Naive thymus-derived CD4-positive, alpha-beta T cell (primary cell): ENCODE measurements at regions of chr20 and their contacts with region 1.

Region 1: DNA sequence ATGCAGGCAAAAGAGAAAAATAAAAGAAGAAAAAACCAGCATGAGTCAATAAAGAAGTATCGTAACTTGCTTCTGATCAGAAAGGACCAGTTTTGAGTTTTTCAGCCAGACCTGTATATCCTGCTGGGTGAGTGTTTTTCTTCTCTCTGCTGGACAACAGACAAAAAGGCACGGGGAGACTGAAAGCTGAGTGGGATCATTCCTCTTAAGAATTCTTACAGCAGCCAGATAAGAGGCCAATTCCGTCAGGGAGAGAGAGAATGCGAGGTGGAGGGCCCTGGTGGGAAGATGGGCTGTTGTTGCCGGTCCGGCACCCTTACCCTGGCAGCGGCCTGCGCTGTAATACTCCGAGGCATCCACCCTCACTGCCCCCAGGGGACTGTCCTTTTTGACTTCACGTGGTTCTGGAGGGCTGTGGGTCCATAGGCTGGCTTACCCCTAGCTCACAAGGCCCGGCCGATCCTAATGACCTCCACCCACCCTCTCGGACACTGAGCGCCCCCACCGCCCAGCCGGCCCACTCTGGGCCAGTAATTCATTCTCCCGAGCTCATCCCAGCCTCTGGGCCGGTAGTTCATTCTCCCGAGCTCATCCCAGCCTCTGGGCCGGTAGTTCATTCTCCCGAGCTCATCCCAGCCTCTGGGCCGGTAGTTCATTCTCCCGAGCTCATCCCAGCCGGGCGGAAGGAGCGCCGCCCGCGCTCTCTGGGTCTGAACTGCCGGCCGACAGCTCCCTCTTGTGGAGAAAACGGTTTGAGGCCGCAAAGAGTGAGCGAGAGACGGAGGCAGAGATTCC is 118.3 kb upstream of the SIRPA start:
- DNase-seq: peak; percentile 58 to 86 (median 74)
- ATAC-seq: peak; percentile 95
- H3K4me3 ChIP-seq: peak overlapping the region; percentile 77
- H3K4me3 Mint-ChIP-seq: peak overlapping the region; percentile 68 to 94 (median 85)
- H3K27ac ChIP-seq: peak overlapping the region; percentile 50
- H3K27ac Mint-ChIP-seq: peak overlapping the region in 5 of 9 donors; percentile 9 to 66 (median 62)
- H3K4me1 ChIP-seq: no peaks in the 10 kb centered on the region
- H3K4me1 Mint-ChIP-seq: peaks cover 12 to 17% (median 16%) of the 10 kb centered on the region in 7 donors
- H3K27me3 ChIP-seq: no peaks in the 10 kb centered on the region
- H3K27me3 Mint-ChIP-seq: peaks cover 7 to 11% (median 8%) of the 10 kb centered on the region in 5 donors

Region 2: GRCh38 chr20:1313236-1313964 is 463.5 kb before region 1 on chr20:
- CTCF ChIA-PET with region 1: no interaction called
- POLR2A ChIA-PET with region 1: no interaction called
- intact Hi-C with region 1: loop called in 1 of 2 experiments (anchors 5 kb)
- DNase-seq: peak; percentile 41 to 69 (median 57)
- ATAC-seq: peak; percentile 85
- H3K4me3 ChIP-seq: no peak overlapping the region
- H3K4me3 Mint-ChIP-seq: peak overlapping the region in 2 of 10 donors; percentile 28 to 34
- H3K27ac ChIP-seq: no peak overlapping the region
- H3K27ac Mint-ChIP-seq: peak overlapping the region in 1 of 9 donors; percentile 48
- H3K4me1 ChIP-seq: peaks cover 5 to 7% of the 10 kb centered on the region in 2 donors
- H3K4me1 Mint-ChIP-seq: peaks cover 0 to 16% (median 4%) of the 10 kb centered on the region in 7 donors
- H3K27me3 ChIP-seq: no peaks in the 10 kb centered on the region
- H3K27me3 Mint-ChIP-seq: no peaks in the 10 kb centered on the region

Region 3: GRCh38 chr20:1533059-1533458 is 243.8 kb before region 1 on chr20:
- CTCF ChIA-PET with region 1: interaction called, 7 read pairs
- POLR2A ChIA-PET with region 1: no interaction called
- intact Hi-C with region 1: loop called (anchors 1 to 2 kb)
- DNase-seq: peak in 5 of 9 donors; percentile 13 to 30 (median 15)
- ATAC-seq: no peak
- H3K4me3 ChIP-seq: no peak overlapping the region
- H3K4me3 Mint-ChIP-seq: no peak overlapping the region
- H3K27ac ChIP-seq: no peak overlapping the region
- H3K27ac Mint-ChIP-seq: peak overlapping the region in 1 of 9 donors; percentile 38
- H3K4me1 ChIP-seq: no peaks in the 10 kb centered on the region
- H3K4me1 Mint-ChIP-seq: peaks cover 0 to 12% (median 10%) of the 10 kb centered on the region in 7 donors
- H3K27me3 ChIP-seq: no peaks in the 10 kb centered on the region
- H3K27me3 Mint-ChIP-seq: peaks cover 0 to 8% (median 0%) of the 10 kb centered on the region in 5 donors

Region 4: DNA sequence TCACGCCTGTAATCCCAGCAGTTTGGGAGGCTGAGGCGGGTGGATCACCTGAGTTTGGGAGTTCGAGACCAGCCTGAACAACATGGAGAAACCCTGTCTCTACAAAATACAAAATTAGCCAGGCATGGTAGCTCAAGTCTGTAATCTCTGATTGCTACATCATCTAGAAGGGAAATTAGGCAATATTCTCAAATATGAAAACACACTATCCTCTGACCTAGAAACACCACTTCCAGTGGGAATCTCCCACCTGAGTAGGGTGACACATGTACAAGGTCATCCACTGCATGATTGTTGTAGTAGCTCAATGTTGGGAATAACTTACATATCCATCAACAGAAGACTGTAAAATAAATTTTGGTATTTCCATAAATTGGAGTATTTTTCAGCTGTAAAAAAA is 200.2 kb before region 1 on chr20:
- CTCF ChIA-PET with region 1: interaction called, 3 read pairs
- POLR2A ChIA-PET with region 1: no interaction called
- intact Hi-C with region 1: loop called in 1 of 2 experiments (anchors 2 kb)
- DNase-seq: no peak
- ATAC-seq: no peak
- H3K4me3 ChIP-seq: no peak overlapping the region
- H3K4me3 Mint-ChIP-seq: no peak overlapping the region
- H3K27ac ChIP-seq: no peak overlapping the region
- H3K27ac Mint-ChIP-seq: no peak overlapping the region
- H3K4me1 ChIP-seq: no peaks in the 10 kb centered on the region
- H3K4me1 Mint-ChIP-seq: peaks cover 0 to 6% (median 4%) of the 10 kb centered on the region in 7 donors
- H3K27me3 ChIP-seq: no peaks in the 10 kb centered on the region
- H3K27me3 Mint-ChIP-seq: no peaks in the 10 kb centered on the region

Region 5: GRCh38 chr20:1657556-1658334 is 119.1 kb before region 1 on chr20 and contains the start of gene SIRPG:
- CTCF ChIA-PET with region 1: interaction called, 3 read pairs
- POLR2A ChIA-PET with region 1: no interaction called
- intact Hi-C with region 1: loop called in 1 of 2 experiments (anchors 5 kb)
- DNase-seq: peak in 6 of 9 donors; percentile 42 to 56 (median 48)
- ATAC-seq: peak; percentile 70
- H3K4me3 ChIP-seq: peak within 1 kb of the TSS; percentile 85
- H3K4me3 Mint-ChIP-seq: peak within 1 kb of the TSS; percentile 93 to 97 (median 96)
- H3K27ac ChIP-seq: peak within 1 kb of the TSS; percentile 87
- H3K27ac Mint-ChIP-seq: peak within 1 kb of the TSS; percentile 86 to 99 (median 95)
- H3K4me1 ChIP-seq: peaks cover 79 to 81% of the 10 kb centered on the region in 2 donors
- H3K4me1 Mint-ChIP-seq: peaks cover 46 to 95% (median 90%) of the 10 kb centered on the region in 7 donors
- H3K27me3 ChIP-seq: no peaks in the 10 kb centered on the region
- H3K27me3 Mint-ChIP-seq: no peaks in the 10 kb centered on the region
- total RNA-seq, gene SIRPG: 25.6 to 71.7 (median 50.2) TPM